PC-9 (cell line): ENCODE measurements at regions of chr5 and their contacts with region 1.

Region 1: GRCh38 chr5:32174011-32174870 is at the start of gene GOLPH3:
- DNase-seq: peak; percentile 84 to 98
- H3K4me3 ChIP-seq: peak within 1 kb of the TSS; percentile 93
- H3K27ac ChIP-seq: peak within 1 kb of the TSS; percentile 95
- H3K4me1 ChIP-seq: peaks cover 43% of the 10 kb centered on the region
- H3K27me3 ChIP-seq: no peaks in the 10 kb centered on the region
- CTCF ChIP-seq: no peak
- total RNA-seq, gene GOLPH3: 179 and 267 TPM in 2 replicates

Region 2: DNA sequence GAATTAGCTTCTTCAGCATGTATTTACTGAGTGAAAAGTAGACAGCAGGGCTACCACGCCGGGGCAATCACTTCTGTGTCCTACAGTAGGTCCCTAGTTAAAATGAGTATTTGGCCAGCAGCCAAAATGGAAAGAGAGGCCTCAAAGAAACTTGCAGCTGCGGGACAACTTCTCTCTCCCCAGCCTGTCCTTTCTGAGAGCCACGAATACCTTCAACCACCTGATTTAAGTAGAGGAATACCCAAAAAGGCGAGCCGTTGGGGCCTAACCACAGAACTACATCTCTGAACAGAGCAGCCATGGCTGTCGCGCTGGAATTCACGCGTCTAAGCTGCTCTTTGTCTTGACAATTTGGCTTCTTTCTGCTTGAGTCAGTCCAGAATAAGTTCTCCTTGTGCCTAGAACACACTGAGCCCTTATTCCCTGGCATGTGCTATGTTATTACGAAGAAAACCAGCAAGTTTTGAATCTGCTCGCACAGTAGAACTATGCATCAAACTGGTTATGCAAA is 43.7 kb after region 1 on chr5:
- CTCF ChIA-PET with region 1: no interaction called
- POLR2A ChIA-PET with region 1: interaction called, 13 read pairs
- intact Hi-C with region 1: no loop called
- DNase-seq: peak in 1 of 2 experiments; percentile 35
- H3K4me3 ChIP-seq: no peak overlapping the region
- H3K27ac ChIP-seq: no peak overlapping the region
- H3K4me1 ChIP-seq: peaks cover 4% of the 10 kb centered on the region
- H3K27me3 ChIP-seq: no peaks in the 10 kb centered on the region
- CTCF ChIP-seq: no peak

Region 3: DNA sequence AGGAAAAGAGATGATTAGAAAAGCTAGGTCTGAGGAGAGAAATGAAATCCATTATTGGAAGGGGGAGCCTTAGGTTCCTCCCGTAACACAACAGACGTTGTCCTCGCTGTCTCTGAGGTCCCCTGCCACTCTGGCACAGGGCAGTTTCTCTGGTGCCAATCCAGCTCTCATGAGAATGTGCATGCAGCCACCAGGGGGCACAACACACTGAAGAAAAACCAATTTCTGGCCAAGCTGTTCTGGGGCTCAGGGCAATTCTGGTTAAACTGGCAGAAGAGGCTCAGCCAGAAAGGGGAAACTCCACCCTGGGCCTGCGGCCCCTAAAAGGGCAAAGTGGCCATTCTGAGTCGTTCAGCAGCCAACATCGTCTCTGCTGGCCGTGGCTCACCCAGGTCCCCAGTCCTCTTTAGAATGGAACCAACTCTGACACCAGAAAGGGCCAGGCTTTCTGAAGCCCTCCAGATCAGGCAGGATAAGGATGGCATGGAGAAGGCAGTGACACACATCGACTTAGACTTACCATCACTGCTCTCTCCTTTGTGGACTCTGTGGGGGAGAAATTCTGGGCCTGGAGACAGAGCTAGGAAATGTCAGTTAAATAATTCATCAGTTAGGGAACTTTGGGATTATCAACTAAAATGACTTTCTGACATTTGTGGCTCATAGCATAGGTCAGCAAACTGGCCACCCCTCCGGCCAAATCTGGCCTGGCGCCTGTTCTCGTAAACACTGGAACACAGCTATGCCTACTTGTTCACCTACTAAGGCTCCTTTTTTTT is 58.4 kb after region 1 on chr5:
- CTCF ChIA-PET with region 1: interaction called, 5 read pairs
- POLR2A ChIA-PET with region 1: interaction called, 7 read pairs
- intact Hi-C with region 1: loop called (anchors 1 kb)
- DNase-seq: peak; percentile 67 to 92
- H3K4me3 ChIP-seq: no peak overlapping the region
- H3K27ac ChIP-seq: no peak overlapping the region
- H3K4me1 ChIP-seq: peaks cover 8% of the 10 kb centered on the region; the same call in 1 of the 2 replicates
- H3K27me3 ChIP-seq: no peaks in the 10 kb centered on the region
- CTCF ChIP-seq: peak; percentile 98

Region 4: DNA sequence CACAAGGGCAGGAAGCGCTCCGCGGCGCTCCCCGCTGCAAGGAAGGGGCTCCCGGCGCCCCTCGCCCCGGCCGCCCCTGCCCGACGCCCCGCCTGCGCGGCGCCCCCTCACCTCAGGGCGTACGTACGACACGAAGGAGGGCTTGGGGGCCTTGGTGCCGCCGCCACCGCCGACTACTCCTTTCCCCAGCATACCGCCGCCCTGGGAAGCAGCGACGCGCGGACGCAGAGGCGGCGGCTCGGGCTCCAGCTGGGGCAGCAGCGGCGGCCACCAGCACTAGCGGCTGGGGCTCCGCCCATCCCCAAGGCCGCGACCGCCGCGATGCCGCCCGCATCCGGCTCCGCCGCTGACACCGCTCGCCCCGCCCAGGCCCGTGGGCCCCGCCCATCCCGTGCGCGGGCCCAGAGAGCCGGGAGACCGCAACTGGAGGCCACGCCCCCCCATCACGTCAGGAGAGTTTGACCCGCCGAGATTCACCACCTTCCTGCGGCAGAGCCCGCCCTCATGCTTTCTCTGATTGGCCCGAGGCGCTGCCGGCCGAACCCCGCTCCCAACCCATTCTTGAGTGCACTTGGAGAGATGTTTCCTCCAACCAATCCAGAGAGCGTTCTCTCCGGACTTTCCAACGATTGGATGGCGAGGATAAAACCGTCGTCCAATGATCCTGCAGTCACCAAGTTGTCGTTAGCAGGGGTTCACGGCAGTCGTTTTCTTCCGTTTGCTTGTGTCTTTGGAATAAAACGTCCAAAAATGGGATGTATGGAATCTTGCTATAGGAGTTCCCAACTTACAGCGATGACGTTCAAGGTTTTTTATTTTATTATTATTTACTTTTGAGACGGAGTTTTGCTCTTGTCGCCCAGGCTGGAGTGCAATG is 138.6 kb after region 1 on chr5 and contains the start of gene MTMR12:
- CTCF ChIA-PET with region 1: no interaction called
- POLR2A ChIA-PET with region 1: interaction called, 3 read pairs
- intact Hi-C with region 1: loop called (anchors 1 kb)
- DNase-seq: peak; percentile 99 to 100
- H3K4me3 ChIP-seq: peak within 1 kb of the TSS; percentile 91
- H3K27ac ChIP-seq: peak within 1 kb of the TSS; percentile 14
- H3K4me1 ChIP-seq: peaks cover 10% of the 10 kb centered on the region
- H3K27me3 ChIP-seq: no peaks in the 10 kb centered on the region
- CTCF ChIP-seq: no peak
- total RNA-seq, gene MTMR12: 44.5 and 47.5 TPM in 2 replicates

Region 5: DNA sequence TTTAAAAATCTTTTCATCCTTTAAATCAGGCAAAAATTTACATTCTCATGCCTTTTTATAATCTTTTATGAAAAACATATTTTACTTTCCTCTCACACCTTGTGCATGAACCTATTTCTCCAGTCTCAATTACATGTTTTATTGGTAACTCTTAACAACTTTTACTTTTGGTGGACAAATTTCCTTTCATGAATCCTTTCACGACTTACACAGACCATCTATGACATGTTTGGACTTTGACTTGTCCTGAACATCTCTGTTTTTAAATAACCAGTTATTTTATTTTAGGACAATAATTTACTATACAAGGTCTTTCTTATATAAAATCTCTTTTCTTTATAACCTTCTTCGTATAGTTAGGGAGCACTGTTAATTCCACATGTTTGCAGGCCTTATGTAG is 165.0 kb after region 1 on chr5:
- CTCF ChIA-PET with region 1: no interaction called
- POLR2A ChIA-PET with region 1: interaction called, 10 read pairs
- intact Hi-C with region 1: no loop called
- DNase-seq: no peak
- H3K4me3 ChIP-seq: no peak overlapping the region
- H3K27ac ChIP-seq: no peak overlapping the region
- H3K4me1 ChIP-seq: no peaks in the 10 kb centered on the region
- H3K27me3 ChIP-seq: no peaks in the 10 kb centered on the region
- CTCF ChIP-seq: no peak